CD4-positive, alpha-beta T cell (primary cell): ENCODE measurements at regions of chr3 and their contacts with region 1.

Region 1: DNA sequence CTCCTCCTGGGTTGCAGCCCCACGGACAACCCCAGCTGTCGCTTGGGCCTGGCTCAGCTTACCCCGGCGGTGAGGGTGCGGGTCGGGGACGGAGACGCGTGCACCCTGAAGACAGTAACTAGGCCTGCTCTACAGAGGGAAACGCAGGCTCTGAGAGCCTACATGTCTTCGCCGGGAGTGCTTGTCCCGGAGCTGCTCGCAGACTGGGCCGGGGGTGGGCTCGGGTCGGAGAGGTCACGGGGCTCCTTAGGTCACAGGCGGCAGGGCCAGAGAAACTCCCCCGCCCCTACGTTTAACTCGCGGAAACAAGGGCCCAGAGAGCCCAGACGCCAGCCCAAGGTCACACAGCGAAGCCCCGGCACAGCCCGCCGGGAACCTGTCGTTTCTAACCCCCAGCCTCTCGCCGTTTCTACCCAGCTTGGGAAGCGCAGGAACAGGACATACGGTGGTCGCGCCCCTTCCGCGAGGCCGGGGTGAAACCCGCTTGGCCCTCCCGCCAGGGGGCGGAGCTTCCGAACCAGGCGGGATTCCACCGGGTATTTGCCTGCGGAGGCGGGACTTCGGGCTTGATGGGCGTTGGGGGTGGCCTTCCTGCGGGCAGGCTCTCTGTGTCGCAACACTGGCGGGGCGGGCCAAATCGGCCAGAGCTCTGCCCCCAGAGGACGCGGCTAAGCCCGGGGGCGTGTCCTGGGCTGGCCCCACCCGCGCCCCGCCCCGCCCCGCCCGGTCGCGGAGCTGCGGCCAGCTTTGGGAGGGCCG is at the start of gene HDAC11:
- DNase-seq: peak; percentile 92 to 99 (median 97)
- ATAC-seq: peak; percentile 92
- H3K4me3 ChIP-seq: peak within 1 kb of the TSS; percentile 95
- H3K4me3 Mint-ChIP-seq: peak within 1 kb of the TSS; percentile 97
- H3K27ac ChIP-seq: peak within 1 kb of the TSS; percentile 79 to 80
- H3K27ac Mint-ChIP-seq: peak within 1 kb of the TSS; percentile 96
- H3K4me1 ChIP-seq: peaks cover 36% of the 10 kb centered on the region
- H3K4me1 Mint-ChIP-seq: peaks cover 9% of the 10 kb centered on the region
- H3K27me3 ChIP-seq: no peaks in the 10 kb centered on the region
- H3K27me3 Mint-ChIP-seq: no peaks in the 10 kb centered on the region
- CTCF ChIP-seq: no peak
- total RNA-seq, gene HDAC11: 4.5 to 4.6 TPM

Region 2: DNA sequence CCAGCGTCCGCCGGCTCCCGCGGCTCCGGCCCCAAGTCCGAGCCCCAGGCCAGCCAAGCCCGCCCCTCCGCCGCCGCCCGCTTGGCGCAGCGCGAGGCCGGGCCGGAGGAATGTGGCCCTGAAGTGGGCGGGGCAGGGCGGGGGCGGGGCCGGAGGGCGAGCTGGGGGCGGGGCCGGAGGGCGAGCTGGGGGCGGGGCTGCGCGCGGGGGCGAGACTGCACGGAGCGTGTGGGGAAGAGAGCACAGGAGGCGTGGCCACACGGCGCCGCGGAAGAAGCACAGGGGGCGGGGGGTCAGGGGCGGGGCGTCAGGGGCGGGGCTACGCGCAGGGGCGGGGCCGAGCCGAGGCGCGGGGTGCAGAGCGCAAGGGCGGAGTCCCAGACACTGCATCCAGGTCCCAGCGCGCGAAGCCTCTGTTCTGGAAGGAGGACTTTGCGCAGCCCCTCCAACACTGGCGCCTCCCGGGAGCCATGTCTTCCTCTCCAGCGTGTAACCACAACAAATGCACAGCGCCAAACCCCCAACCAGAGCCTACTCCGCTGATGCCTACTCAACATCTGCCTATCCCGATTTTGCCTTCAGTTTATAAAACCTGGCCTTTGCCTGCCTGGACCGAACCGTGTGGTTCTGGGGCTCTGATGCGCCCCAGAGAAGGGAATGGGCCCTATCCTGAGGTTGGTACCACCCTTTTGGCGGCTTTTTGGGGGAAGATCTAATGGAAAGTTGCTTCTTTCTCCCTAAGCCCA is 512.0 kb before region 1 on chr3:
- CTCF ChIA-PET with region 1: no interaction called
- POLR2A ChIA-PET with region 1: no interaction called
- intact Hi-C with region 1: loop called in 1 of 2 experiments (anchors 2 kb)
- DNase-seq: peak; percentile 82 to 97 (median 88)
- ATAC-seq: peak; percentile 95
- H3K4me3 ChIP-seq: peak overlapping the region; percentile 47
- H3K4me3 Mint-ChIP-seq: peak overlapping the region; percentile 80
- H3K27ac ChIP-seq: no peak overlapping the region
- H3K27ac Mint-ChIP-seq: peak overlapping the region; percentile 67
- H3K4me1 ChIP-seq: peaks cover 65% of the 10 kb centered on the region
- H3K4me1 Mint-ChIP-seq: peaks cover 78% of the 10 kb centered on the region
- H3K27me3 ChIP-seq: no peaks in the 10 kb centered on the region
- H3K27me3 Mint-ChIP-seq: no peaks in the 10 kb centered on the region
- CTCF ChIP-seq: no peak

Region 3: GRCh38 chr3:13223574-13224237 is 256.1 kb before region 1 on chr3:
- CTCF ChIA-PET with region 1: no interaction called
- POLR2A ChIA-PET with region 1: no interaction called
- intact Hi-C with region 1: no loop called
- DNase-seq: no peak
- ATAC-seq: no peak
- H3K4me3 ChIP-seq: no peak overlapping the region
- H3K4me3 Mint-ChIP-seq: no peak overlapping the region
- H3K27ac ChIP-seq: no peak overlapping the region
- H3K27ac Mint-ChIP-seq: no peak overlapping the region
- H3K4me1 ChIP-seq: no peaks in the 10 kb centered on the region
- H3K4me1 Mint-ChIP-seq: no peaks in the 10 kb centered on the region
- H3K27me3 ChIP-seq: no peaks in the 10 kb centered on the region
- H3K27me3 Mint-ChIP-seq: no peaks in the 10 kb centered on the region
- CTCF ChIP-seq: no peak

Region 4: DNA sequence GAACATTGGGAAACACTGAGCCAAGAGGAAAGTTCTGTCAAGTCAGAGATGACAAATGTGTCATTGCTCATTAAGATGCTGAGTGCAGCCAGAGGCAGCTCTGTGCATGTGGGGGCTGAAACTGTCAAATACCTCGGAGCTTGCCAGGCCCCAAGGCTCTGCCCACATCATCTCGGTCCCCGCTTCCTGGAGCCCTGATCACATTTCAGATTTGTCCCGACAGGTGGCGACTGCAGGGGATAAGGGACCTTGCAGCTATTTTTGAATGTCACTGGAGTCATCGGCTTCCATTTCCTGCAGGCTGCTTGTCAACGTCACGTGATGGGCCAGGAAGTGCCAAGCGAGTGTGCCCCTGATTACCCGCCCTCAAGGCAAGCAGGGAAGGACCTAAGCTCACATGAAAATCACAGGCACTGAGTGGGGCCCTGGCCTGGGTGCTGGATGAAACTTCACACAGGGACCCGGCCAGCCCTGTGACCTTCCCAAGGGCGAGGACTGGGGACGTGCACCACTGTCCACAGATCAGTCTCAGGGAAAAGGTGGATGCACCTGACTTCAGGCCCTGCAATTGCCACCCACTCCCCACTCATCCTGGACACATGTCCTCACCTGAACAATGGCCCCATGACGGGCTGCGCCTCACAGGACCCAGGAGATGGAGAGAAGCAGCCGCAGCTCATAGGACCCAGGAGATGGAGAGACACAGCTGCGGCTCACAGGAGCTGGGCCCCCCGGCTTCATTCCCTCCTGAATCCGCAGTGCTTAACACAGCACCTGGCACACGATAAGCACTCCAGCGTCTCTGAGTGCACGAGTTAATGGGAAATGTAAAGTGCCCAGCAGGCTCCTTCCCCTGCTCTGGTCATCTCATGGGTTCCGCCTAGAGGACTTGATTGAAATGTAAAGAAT is 133.0 kb before region 1 on chr3:
- CTCF ChIA-PET with region 1: no interaction called
- POLR2A ChIA-PET with region 1: interaction called, 20 read pairs
- intact Hi-C with region 1: no loop called
- DNase-seq: peak; percentile 60 to 91 (median 73)
- ATAC-seq: peak; percentile 85
- H3K4me3 ChIP-seq: no peak overlapping the region
- H3K4me3 Mint-ChIP-seq: peak overlapping the region; percentile 68
- H3K27ac ChIP-seq: peak overlapping the region; percentile 39 to 54
- H3K27ac Mint-ChIP-seq: peak overlapping the region; percentile 85
- H3K4me1 ChIP-seq: peaks cover 44% of the 10 kb centered on the region
- H3K4me1 Mint-ChIP-seq: peaks cover 54% of the 10 kb centered on the region
- H3K27me3 ChIP-seq: no peaks in the 10 kb centered on the region
- H3K27me3 Mint-ChIP-seq: no peaks in the 10 kb centered on the region
- CTCF ChIP-seq: peak; percentile 51

Region 5: GRCh38 chr3:13427662-13428603 is 51.8 kb before region 1 on chr3:
- CTCF ChIA-PET with region 1: no interaction called
- POLR2A ChIA-PET with region 1: interaction called, 11 read pairs
- intact Hi-C with region 1: no loop called
- DNase-seq: peak in 10 of 14 experiments; percentile 20 to 82 (median 48)
- ATAC-seq: peak; percentile 99
- H3K4me3 ChIP-seq: no peak overlapping the region
- H3K4me3 Mint-ChIP-seq: peak overlapping the region; percentile 59
- H3K27ac ChIP-seq: peak overlapping the region; percentile 64 to 69
- H3K27ac Mint-ChIP-seq: peak overlapping the region; percentile 86
- H3K4me1 ChIP-seq: peaks cover 50% of the 10 kb centered on the region
- H3K4me1 Mint-ChIP-seq: peaks cover 39% of the 10 kb centered on the region
- H3K27me3 ChIP-seq: no peaks in the 10 kb centered on the region
- H3K27me3 Mint-ChIP-seq: no peaks in the 10 kb centered on the region
- CTCF ChIP-seq: no peak

Region 6: DNA sequence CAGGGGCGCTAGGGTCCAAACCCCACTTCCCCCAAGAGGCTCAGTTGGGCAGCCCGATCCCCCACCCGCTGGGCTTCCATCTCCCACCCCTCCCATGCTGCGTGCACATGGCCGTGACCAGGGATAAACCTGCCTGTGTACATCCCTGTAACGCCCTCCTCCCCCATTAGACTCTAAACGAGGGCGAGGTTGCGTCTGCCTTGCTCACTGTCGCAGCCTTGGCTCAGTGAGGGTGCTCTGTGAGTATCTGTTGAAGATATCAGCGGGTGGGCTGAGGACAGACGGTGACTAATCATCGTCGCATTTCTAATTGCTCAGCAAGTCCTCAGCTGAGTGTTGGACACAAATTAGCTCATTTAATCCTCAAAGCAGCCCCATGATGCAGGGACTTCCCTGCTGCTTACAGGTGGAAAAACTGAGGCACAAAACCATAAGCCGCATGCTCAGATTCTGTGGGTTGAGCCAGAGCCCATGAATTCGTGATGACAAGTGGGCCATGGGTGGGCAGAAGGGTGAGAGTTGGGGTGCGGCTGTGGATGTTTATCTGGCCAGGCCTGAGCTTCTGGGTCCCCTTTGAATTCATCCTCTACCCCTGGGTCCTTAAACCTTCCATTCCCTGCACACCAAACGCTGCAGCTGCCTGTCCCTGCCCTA is 95.2 kb after region 1 on chr3:
- CTCF ChIA-PET with region 1: no interaction called
- POLR2A ChIA-PET with region 1: no interaction called
- intact Hi-C with region 1: no loop called
- DNase-seq: no peak
- ATAC-seq: no peak
- H3K4me3 ChIP-seq: no peak overlapping the region
- H3K4me3 Mint-ChIP-seq: no peak overlapping the region
- H3K27ac ChIP-seq: no peak overlapping the region
- H3K27ac Mint-ChIP-seq: no peak overlapping the region
- H3K4me1 ChIP-seq: no peaks in the 10 kb centered on the region
- H3K4me1 Mint-ChIP-seq: no peaks in the 10 kb centered on the region
- H3K27me3 ChIP-seq: no peaks in the 10 kb centered on the region
- H3K27me3 Mint-ChIP-seq: no peaks in the 10 kb centered on the region
- CTCF ChIP-seq: no peak

Region 7: GRCh38 chr3:13673209-13673608 is 193.4 kb after region 1 on chr3:
- CTCF ChIA-PET with region 1: no interaction called
- POLR2A ChIA-PET with region 1: no interaction called
- intact Hi-C with region 1: no loop called
- DNase-seq: no peak
- ATAC-seq: no peak
- H3K4me3 ChIP-seq: no peak overlapping the region
- H3K4me3 Mint-ChIP-seq: no peak overlapping the region
- H3K27ac ChIP-seq: no peak overlapping the region
- H3K27ac Mint-ChIP-seq: no peak overlapping the region
- H3K4me1 ChIP-seq: no peaks in the 10 kb centered on the region
- H3K4me1 Mint-ChIP-seq: no peaks in the 10 kb centered on the region
- H3K27me3 ChIP-seq: peaks cover 8 to 10% of the 10 kb centered on the region in 2 experiments
- H3K27me3 Mint-ChIP-seq: peaks cover 32% of the 10 kb centered on the region
- CTCF ChIP-seq: peak; percentile 22

Region 8: GRCh38 chr3:13884851-13885703 is 405.3 kb after region 1 on chr3:
- CTCF ChIA-PET with region 1: interaction called, 5 read pairs
- POLR2A ChIA-PET with region 1: interaction called, 26 read pairs
- intact Hi-C with region 1: no loop called
- DNase-seq: peak; percentile 61 to 88 (median 72)
- ATAC-seq: peak; percentile 79
- H3K4me3 ChIP-seq: no peak overlapping the region
- H3K4me3 Mint-ChIP-seq: peak overlapping the region; percentile 78
- H3K27ac ChIP-seq: no peak overlapping the region
- H3K27ac Mint-ChIP-seq: peak overlapping the region; percentile 3
- H3K4me1 ChIP-seq: peaks cover 27% of the 10 kb centered on the region
- H3K4me1 Mint-ChIP-seq: peaks cover 22% of the 10 kb centered on the region
- H3K27me3 ChIP-seq: peaks cover 4 to 13% of the 10 kb centered on the region in 2 experiments
- H3K27me3 Mint-ChIP-seq: peaks cover 15% of the 10 kb centered on the region
- CTCF ChIP-seq: peak; percentile 95